ENCODE measurements at regions of chr15 and their contacts with region 1.

Region 1: GRCh38 chr15:92645030-92645756 is 10.4 kb downstream of the FAM174B start:
- DNase-seq: peak; percentile 61 to 95
- H3K4me3 ChIP-seq: peak overlapping the region; percentile 63; the same call in 1 of the 2 replicates
- H3K27ac ChIP-seq: peak overlapping the region; percentile 97
- H3K4me1 ChIP-seq: peaks cover 99% of the 10 kb centered on the region
- H3K27me3 ChIP-seq: no peaks in the 10 kb centered on the region
- CTCF ChIP-seq: no peak

Region 2: GRCh38 chr15:92617549-92618520 is 27.4 kb before region 1 on chr15:
- CTCF ChIA-PET with region 1: no interaction called
- POLR2A ChIA-PET with region 1: no interaction called
- intact Hi-C with region 1: loop called (anchors 2 kb)
- DNase-seq: peak; percentile 40 to 57
- H3K4me3 ChIP-seq: no peak overlapping the region
- H3K27ac ChIP-seq: 0 out of 2 replicates have a peak overlapping the region, but pooled peaks have one; percentile 11
- H3K4me1 ChIP-seq: no peaks in the 10 kb centered on the region; the same call in 1 of the 2 replicates
- H3K27me3 ChIP-seq: no peaks in the 10 kb centered on the region
- CTCF ChIP-seq: no peak

Region 3: GRCh38 chr15:92655178-92655995 is 10.2 kb after region 1 on chr15 and contains the start of gene FAM174B:
- CTCF ChIA-PET with region 1: no interaction called
- POLR2A ChIA-PET with region 1: no interaction called
- intact Hi-C with region 1: loop called (anchors 1 kb)
- DNase-seq: peak in 1 of 2 experiments; percentile 51
- H3K4me3 ChIP-seq: peak within 1 kb of the TSS; percentile 55
- H3K27ac ChIP-seq: peak within 1 kb of the TSS; percentile 85
- H3K4me1 ChIP-seq: peaks cover 55% of the 10 kb centered on the region
- H3K27me3 ChIP-seq: no peaks in the 10 kb centered on the region
- CTCF ChIP-seq: no peak
- total RNA-seq, gene FAM174B: 77.5 and 90.3 TPM in 2 replicates

Region 4: GRCh38 chr15:92803847-92804609 is 158.8 kb after region 1 on chr15:
- CTCF ChIA-PET with region 1: no interaction called
- POLR2A ChIA-PET with region 1: no interaction called
- intact Hi-C with region 1: loop called (anchors 1 kb)
- DNase-seq: peak; percentile 92 to 100
- H3K4me3 ChIP-seq: no peak overlapping the region; the same call in 1 of the 2 replicates
- H3K27ac ChIP-seq: peak overlapping the region; percentile 98
- H3K4me1 ChIP-seq: peaks cover 57% of the 10 kb centered on the region
- H3K27me3 ChIP-seq: no peaks in the 10 kb centered on the region
- CTCF ChIP-seq: no peak

Region 5: GRCh38 chr15:93048759-93049161 is 403.6 kb after region 1 on chr15:
- CTCF ChIA-PET with region 1: no interaction called
- POLR2A ChIA-PET with region 1: no interaction called
- intact Hi-C with region 1: loop called (anchors 5 kb)
- DNase-seq: peak in 1 of 2 experiments; percentile 43
- H3K4me3 ChIP-seq: no peak overlapping the region
- H3K27ac ChIP-seq: no peak overlapping the region
- H3K4me1 ChIP-seq: no peaks in the 10 kb centered on the region
- H3K27me3 ChIP-seq: no peaks in the 10 kb centered on the region
- CTCF ChIP-seq: no peak

Measured in PC-9 (cell line).